ENCODE measurements at regions of chr12 and their contacts with region 1.

Region 1: DNA sequence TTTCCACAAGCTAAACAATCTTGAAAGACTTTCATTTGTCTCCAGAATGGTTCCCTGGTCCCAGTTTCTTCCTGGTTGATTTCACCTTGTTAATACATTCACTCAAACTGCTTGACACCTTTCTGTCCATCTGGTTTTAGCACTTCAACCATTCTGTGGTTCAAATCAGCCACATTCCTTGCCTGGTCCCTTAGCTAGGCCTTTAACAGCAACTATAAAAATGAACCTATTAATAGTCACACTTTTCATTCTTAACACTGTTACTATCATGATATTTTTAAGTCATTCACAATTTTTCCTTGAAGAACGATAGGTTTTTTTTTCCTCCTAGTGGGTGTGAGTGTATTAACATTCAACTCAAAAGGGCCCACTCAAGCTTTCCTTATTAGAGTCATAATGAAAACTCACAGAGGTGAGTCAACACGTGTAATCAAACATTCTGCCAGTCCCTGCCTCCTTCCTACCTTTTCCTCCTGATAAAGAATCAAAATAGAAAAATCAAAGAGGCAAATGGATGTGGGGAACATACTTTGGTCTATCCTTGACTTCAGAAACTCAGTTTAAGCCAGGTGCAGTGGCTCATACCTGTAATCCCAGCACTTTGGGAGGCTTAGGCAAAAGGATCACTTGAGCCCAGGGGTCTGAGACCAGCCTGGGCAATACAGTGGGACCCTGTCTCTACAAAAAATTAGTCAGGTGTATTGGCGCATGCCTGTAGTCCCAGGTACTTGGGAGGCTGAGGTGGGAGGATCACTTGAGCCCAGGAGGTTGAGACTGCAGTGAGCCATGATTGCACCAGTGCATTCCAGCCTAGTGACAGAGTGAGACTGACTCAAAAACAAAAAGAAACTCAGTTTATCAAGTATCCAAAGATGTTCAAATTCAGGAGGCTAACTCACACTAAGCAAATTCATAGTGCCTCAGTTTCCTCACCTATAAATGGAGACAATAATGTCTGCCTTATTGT is 34.5 kb upstream of the CCNT1 start:
- DNase-seq: no peak
- ATAC-seq: no peak
- H3K4me3 ChIP-seq: no peak overlapping the region
- H3K27ac ChIP-seq: no peak overlapping the region
- H3K4me1 ChIP-seq: no peaks in the 10 kb centered on the region
- H3K27me3 ChIP-seq: no peaks in the 10 kb centered on the region
- CTCF ChIP-seq: no peak

Region 2: DNA sequence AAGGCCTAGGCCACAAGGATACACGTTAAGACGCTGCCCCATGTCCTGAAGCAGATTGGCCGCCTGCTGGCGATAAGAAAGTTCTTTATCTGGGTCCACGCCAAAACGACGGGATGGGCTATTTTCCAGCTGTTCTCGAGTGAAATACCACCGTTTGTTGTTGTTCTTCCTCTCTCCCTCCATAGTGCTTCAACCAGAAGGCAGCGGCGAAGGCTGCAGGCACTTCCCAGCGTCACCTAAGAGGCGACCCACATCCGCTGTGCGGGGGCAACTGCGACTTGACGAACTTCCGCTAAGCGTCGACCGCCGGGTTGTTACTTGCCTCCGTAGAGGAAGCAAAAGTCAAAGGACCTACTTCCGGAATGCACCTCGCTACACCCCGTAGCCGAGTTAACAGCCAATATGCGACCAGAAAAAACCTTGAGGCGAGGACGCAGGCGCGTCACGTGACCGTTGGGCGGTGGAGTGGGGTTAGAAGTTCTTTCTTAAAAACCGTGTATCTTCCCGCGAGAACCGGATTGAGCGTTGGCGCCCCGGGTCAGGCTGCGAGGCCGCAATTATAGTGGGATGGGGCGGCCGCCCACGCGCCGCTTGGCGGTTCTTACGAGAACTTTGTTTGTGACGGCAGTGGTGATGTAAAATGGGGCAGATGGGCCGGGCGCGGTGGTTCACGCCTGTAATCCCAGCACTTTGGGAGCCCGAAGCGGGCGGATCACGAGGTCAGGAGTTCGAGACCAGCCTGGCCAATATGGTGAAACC is 34.4 kb before region 1 on chr12 and contains the start of gene CCNT1:
- CTCF ChIA-PET with region 1: no interaction called
- POLR2A ChIA-PET with region 1: interaction called, 15 read pairs
- in situ Hi-C with region 1: no loop called
- intact Hi-C with region 1: no loop called
- DNase-seq: peak; percentile 100
- ATAC-seq: peak; percentile 99
- H3K4me3 ChIP-seq: peak within 1 kb of the TSS; percentile 92 to 95
- H3K27ac ChIP-seq: peak within 1 kb of the TSS; percentile 98
- H3K4me1 ChIP-seq: peaks cover 13% of the 10 kb centered on the region; the same call in 1 of the 2 replicates
- H3K27me3 ChIP-seq: no peaks in the 10 kb centered on the region
- CTCF ChIP-seq: no peak
- total RNA-seq, gene CCNT1: 50.0 TPM

Region 3: DNA sequence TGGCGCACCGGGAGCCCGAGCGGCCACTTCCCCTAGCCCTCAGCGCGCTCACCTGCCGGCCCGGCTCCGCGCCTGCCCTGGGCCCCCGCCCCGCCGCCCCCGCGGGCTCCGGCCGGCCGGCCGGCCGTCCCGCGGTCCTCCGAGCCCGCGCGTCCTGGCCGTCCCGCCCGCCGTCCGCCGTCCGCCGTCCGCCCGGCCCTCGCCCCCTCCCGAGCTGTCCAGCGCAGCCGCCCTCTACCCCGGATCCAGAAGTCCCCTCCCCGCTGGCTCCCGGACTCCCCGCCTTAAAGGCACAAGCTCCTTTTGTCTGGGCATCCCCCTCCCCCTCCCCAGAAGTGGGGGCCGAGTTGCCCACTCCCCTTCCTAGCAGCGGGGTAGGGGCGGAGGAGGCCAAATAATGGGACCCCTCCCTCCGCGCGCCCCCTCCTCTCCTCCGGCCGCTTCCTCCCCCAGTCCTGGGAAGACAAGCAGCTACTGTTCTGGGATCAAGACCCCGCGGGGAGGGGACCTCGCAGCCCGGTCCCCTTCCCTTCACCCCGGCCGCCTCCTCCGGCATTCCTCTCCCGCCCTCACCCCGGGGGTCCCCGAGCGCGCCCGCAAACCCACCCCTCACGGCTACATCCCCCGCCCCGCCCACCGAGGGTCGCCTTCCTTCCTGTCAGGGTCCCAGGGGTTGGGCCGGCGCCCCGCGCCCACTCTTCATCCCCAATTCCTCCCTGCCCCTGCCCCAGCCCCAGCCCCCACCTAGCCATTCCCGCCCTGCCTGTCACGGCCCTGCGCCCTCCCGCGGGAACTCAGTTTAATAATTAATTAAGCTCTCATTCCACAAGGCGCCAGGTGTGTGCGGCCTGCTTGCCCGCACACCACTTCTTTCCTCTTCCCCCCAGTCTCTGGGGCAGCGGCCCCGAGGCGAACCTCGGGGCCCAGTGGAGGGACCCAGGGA is 38.1 kb after region 1 on chr12 and contains the start of gene ADCY6:
- CTCF ChIA-PET with region 1: interaction called, 51 read pairs
- POLR2A ChIA-PET with region 1: no interaction called
- in situ Hi-C with region 1: no loop called
- intact Hi-C with region 1: loop called (anchors 2 kb)
- DNase-seq: no peak
- ATAC-seq: peak; percentile 86
- H3K4me3 ChIP-seq: peak within 1 kb of the TSS; percentile 61 to 70
- H3K27ac ChIP-seq: peak within 1 kb of the TSS; percentile 70
- H3K4me1 ChIP-seq: peaks cover 3% of the 10 kb centered on the region
- H3K27me3 ChIP-seq: no peaks in the 10 kb centered on the region
- CTCF ChIP-seq: no peak
- total RNA-seq, gene ADCY6: 24.1 TPM

Measured in Panc1 (cell line).